WTC11 (cell line): ENCODE measurements at regions of chr17 and their contacts with region 1.

Region 1: GRCh38 chr17:47840740-47841603 is at the start of gene SCRN2:
- DNase-seq: peak; percentile 97
- ATAC-seq: peak; percentile 95
- H3K4me3 Mint-ChIP-seq: peak within 1 kb of the TSS; percentile 95
- H3K27ac Mint-ChIP-seq: peak within 1 kb of the TSS; percentile 80; the same call in 1 of the 2 replicates
- H3K4me1 Mint-ChIP-seq: peaks cover 41% of the 10 kb centered on the region
- H3K27me3 Mint-ChIP-seq: peaks cover 19% of the 10 kb centered on the region
- CTCF ChIP-seq: peak; percentile 87
- total RNA-seq, gene SCRN2: 50.8 to 54.1 TPM (median 51.6 TPM) in 3 replicates

Region 2: GRCh38 chr17:47733047-47733673 is 107.8 kb before region 1 on chr17 and contains the start of gene TBX21:
- CTCF ChIA-PET with region 1: no interaction called
- POLR2A ChIA-PET with region 1: no interaction called
- DNase-seq: peak; percentile 79
- ATAC-seq: peak; percentile 79
- H3K4me3 Mint-ChIP-seq: peak within 1 kb of the TSS; percentile 81
- H3K27ac Mint-ChIP-seq: no peak within 1 kb of the TSS
- H3K4me1 Mint-ChIP-seq: peaks cover 9% of the 10 kb centered on the region
- H3K27me3 Mint-ChIP-seq: peaks cover 77% of the 10 kb centered on the region
- CTCF ChIP-seq: no peak
- total RNA-seq, gene TBX21: 0.15 to 0.18 TPM in 2 of 3 replicates, not detected in the other

Region 3: GRCh38 chr17:47797797-47798196 is 43.2 kb before region 1 on chr17:
- CTCF ChIA-PET with region 1: no interaction called
- POLR2A ChIA-PET with region 1: no interaction called
- DNase-seq: peak; percentile 12
- ATAC-seq: no peak
- H3K4me3 Mint-ChIP-seq: no peak overlapping the region
- H3K27ac Mint-ChIP-seq: no peak overlapping the region
- H3K4me1 Mint-ChIP-seq: no peaks in the 10 kb centered on the region
- H3K27me3 Mint-ChIP-seq: peaks cover 25% of the 10 kb centered on the region
- CTCF ChIP-seq: no peak

Region 4: GRCh38 chr17:47821424-47822391 is 19.3 kb before region 1 on chr17 and contains the start of gene OSBPL7:
- CTCF ChIA-PET with region 1: interaction called, 36 read pairs
- POLR2A ChIA-PET with region 1: no interaction called
- DNase-seq: peak; percentile 69
- ATAC-seq: peak; percentile 97
- H3K4me3 Mint-ChIP-seq: peak within 1 kb of the TSS; percentile 95
- H3K27ac Mint-ChIP-seq: no peak within 1 kb of the TSS; the same call in 1 of the 2 replicates
- H3K4me1 Mint-ChIP-seq: peaks cover 20% of the 10 kb centered on the region
- H3K27me3 Mint-ChIP-seq: no peaks in the 10 kb centered on the region
- CTCF ChIP-seq: no peak
- total RNA-seq, gene OSBPL7: 8.2 to 13.5 TPM (median 10.7 TPM) in 3 replicates

Region 5: DNA sequence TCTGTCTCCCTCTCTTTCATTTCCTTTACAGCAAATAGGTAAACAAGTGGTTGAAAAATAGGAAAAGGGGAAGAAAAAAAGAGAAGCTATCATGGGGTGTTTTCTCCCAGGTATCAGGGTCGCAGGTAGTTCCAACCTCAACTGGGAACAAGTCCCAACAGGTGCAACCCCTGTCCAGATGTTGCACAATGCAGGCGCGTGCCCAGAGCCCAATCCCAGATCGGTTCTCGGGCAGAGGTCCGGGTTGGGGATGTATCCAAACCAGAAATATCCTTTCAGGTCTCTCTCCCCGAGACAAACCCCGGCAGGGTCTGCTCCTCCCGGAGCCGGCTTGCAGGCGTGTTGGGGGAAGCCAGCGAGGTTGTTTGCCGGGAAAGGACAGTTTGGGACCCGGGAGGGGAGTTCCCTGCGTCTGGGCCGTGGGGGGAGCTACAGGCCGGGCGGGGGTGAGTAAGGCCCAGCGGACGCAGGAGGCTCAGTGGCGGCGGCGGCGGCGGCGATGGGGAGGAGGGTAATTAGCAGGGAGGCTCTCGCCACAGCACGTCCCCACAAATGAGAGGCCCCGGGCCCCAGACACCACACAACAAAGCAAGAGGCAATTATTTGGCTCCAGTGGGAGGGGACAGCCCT is 31.2 kb after region 1 on chr17:
- CTCF ChIA-PET with region 1: interaction called, 94 read pairs
- POLR2A ChIA-PET with region 1: no interaction called
- DNase-seq: peak; percentile 64
- ATAC-seq: peak; percentile 57
- H3K4me3 Mint-ChIP-seq: peak overlapping the region; percentile 70
- H3K27ac Mint-ChIP-seq: no peak overlapping the region
- H3K4me1 Mint-ChIP-seq: peaks cover 56% of the 10 kb centered on the region
- H3K27me3 Mint-ChIP-seq: peaks cover 75% of the 10 kb centered on the region
- CTCF ChIP-seq: no peak

Region 6: DNA sequence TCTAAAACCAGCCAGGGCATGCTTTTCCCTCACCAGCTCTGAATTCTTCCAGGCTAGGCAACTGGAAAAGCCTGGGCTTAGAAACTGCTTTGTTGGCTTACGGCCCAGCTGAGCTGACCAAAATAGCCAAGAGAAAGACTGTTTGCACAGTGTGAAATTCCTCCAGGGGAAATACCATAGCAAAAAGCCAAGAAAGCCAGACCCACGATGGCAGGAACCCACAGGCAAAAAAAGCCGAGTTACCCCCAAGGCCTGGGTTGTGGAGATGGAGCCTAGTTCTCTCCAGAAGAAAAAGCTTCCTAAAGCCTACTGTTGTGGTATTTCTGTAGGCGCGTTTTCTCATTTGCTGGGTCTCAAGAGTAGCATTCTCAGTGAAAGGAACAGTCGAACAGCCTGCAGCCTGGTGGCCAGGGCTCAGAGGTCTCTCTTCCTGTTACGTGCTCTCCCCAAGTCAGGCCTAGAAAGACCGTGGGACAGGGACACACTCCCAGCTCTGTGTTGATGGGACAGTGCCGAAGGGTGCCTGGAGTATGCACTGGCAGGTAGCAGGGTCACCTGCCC is 64.3 kb after region 1 on chr17:
- CTCF ChIA-PET with region 1: interaction called, 11 read pairs
- POLR2A ChIA-PET with region 1: no interaction called
- DNase-seq: no peak
- ATAC-seq: no peak
- H3K4me3 Mint-ChIP-seq: no peak overlapping the region
- H3K27ac Mint-ChIP-seq: peak overlapping the region; percentile 2
- H3K4me1 Mint-ChIP-seq: peaks cover 40% of the 10 kb centered on the region
- H3K27me3 Mint-ChIP-seq: no peaks in the 10 kb centered on the region
- CTCF ChIP-seq: no peak

Region 7: GRCh38 chr17:47949136-47949759 is 108.3 kb after region 1 on chr17:
- CTCF ChIA-PET with region 1: interaction called, 29 read pairs
- POLR2A ChIA-PET with region 1: no interaction called
- DNase-seq: peak; percentile 98
- ATAC-seq: peak; percentile 88
- H3K4me3 Mint-ChIP-seq: peak overlapping the region; percentile 47
- H3K27ac Mint-ChIP-seq: peak overlapping the region; percentile 83
- H3K4me1 Mint-ChIP-seq: peaks cover 16% of the 10 kb centered on the region
- H3K27me3 Mint-ChIP-seq: no peaks in the 10 kb centered on the region
- CTCF ChIP-seq: peak; percentile 72

Region 8: GRCh38 chr17:47970704-47971463 is 129.9 kb after region 1 on chr17 and contains the start of gene CDK5RAP3:
- CTCF ChIA-PET with region 1: interaction called, 31 read pairs
- POLR2A ChIA-PET with region 1: no interaction called
- DNase-seq: peak; percentile 100
- ATAC-seq: peak; percentile 98
- H3K4me3 Mint-ChIP-seq: peak within 1 kb of the TSS; percentile 82
- H3K27ac Mint-ChIP-seq: peak within 1 kb of the TSS; percentile 94
- H3K4me1 Mint-ChIP-seq: peaks cover 14% of the 10 kb centered on the region
- H3K27me3 Mint-ChIP-seq: peaks cover 16% of the 10 kb centered on the region
- CTCF ChIP-seq: peak; percentile 74
- total RNA-seq, gene CDK5RAP3: 128 to 143 TPM (median 138 TPM) in 3 replicates